Naive thymus-derived CD4-positive, alpha-beta T cell (primary cell): ENCODE measurements at regions of chr6 and their contacts with region 1.

Region 1: GRCh38 chr6:31834434-31835198 is 7.1 kb downstream of the HSPA1B start:
- DNase-seq: peak; percentile 77 to 84 (median 82)
- ATAC-seq: peak; percentile 82
- H3K4me3 ChIP-seq: peak overlapping the region; percentile 73
- H3K4me3 Mint-ChIP-seq: peak overlapping the region; percentile 84 to 99 (median 99)
- H3K27ac ChIP-seq: peak overlapping the region; percentile 92
- H3K27ac Mint-ChIP-seq: peak overlapping the region; percentile 91 to 100 (median 99)
- H3K4me1 ChIP-seq: peaks cover 40 to 48% of the 10 kb centered on the region in 2 donors
- H3K4me1 Mint-ChIP-seq: peaks cover 31 to 64% (median 53%) of the 10 kb centered on the region in 7 donors
- H3K27me3 ChIP-seq: no peaks in the 10 kb centered on the region
- H3K27me3 Mint-ChIP-seq: no peaks in the 10 kb centered on the region

Region 2: DNA sequence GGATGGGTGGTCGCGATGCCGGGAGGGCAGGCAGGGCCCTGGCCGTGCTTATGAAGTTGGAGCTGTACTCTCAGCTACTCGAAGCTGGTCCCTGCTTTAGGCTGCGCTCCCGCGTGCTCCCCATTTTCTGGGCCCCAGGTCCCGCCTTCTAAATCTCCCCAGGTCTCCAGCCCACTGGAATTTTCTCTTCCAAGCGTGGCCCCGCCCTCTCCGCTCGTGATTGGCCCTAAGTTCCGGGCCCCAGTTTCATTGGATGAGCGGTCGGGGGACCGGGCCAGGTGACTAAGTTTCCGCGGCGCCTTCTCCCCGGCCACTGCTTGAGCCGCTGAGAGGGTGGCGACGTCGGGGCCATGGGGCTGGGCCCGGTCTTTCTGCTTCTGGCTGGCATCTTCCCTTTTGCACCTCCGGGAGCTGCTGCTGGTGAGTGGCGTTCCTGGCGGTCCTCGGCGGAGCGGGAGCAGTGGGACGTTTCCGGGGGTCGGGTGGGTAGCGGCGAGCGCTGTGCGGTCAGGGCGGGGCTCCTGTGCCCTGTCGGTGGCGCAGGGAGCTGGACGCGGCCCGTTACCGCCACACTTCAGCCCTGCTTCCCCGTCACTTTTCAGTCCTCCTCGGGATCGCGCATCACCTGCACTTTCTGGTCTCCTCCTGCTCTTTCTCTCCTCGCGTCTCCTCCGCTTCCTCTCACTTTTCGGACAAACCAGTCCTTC is 431.2 kb before region 1 on chr6 and contains the start of gene MICA:
- CTCF ChIA-PET with region 1: no interaction called
- POLR2A ChIA-PET with region 1: no interaction called
- intact Hi-C with region 1: loop called in 1 of 2 experiments (anchors 10 kb)
- DNase-seq: peak in 8 of 9 donors; percentile 32 to 79 (median 41)
- ATAC-seq: peak; percentile 71
- H3K4me3 ChIP-seq: peak within 1 kb of the TSS; percentile 79
- H3K4me3 Mint-ChIP-seq: peak within 1 kb of the TSS; percentile 83 to 98 (median 90)
- H3K27ac ChIP-seq: peak within 1 kb of the TSS; percentile 76
- H3K27ac Mint-ChIP-seq: peak within 1 kb of the TSS; percentile 25 to 94 (median 78)
- H3K4me1 ChIP-seq: peaks cover 17 to 19% of the 10 kb centered on the region in 2 donors
- H3K4me1 Mint-ChIP-seq: peaks cover 64 to 90% (median 70%) of the 10 kb centered on the region in 7 donors
- H3K27me3 ChIP-seq: no peaks in the 10 kb centered on the region
- H3K27me3 Mint-ChIP-seq: peaks cover 0 to 2% (median 0%) of the 10 kb centered on the region in 5 donors
- total RNA-seq, gene MICA: 12.1 to 17.4 (median 15.2) TPM

Region 3: GRCh38 chr6:31541658-31542521 is 292.7 kb before region 1 on chr6 and contains the start of gene DDX39B:
- CTCF ChIA-PET with region 1: interaction called, 3 read pairs
- POLR2A ChIA-PET with region 1: interaction called, 4 read pairs
- intact Hi-C with region 1: loop called (anchors 1 kb)
- DNase-seq: peak; percentile 80 to 97 (median 94)
- ATAC-seq: peak; percentile 83
- H3K4me3 ChIP-seq: peak within 1 kb of the TSS; percentile 77
- H3K4me3 Mint-ChIP-seq: peak within 1 kb of the TSS; percentile 84 to 99 (median 98)
- H3K27ac ChIP-seq: peak within 1 kb of the TSS; percentile 97
- H3K27ac Mint-ChIP-seq: peak within 1 kb of the TSS; percentile 90 to 100 (median 100)
- H3K4me1 ChIP-seq: peaks cover 34 to 45% of the 10 kb centered on the region in 2 donors
- H3K4me1 Mint-ChIP-seq: peaks cover 34 to 65% (median 55%) of the 10 kb centered on the region in 7 donors
- H3K27me3 ChIP-seq: no peaks in the 10 kb centered on the region
- H3K27me3 Mint-ChIP-seq: no peaks in the 10 kb centered on the region
- total RNA-seq, gene DDX39B: 443 to 761 (median 546) TPM

Region 4: GRCh38 chr6:31680840-31681671 is 153.6 kb before region 1 on chr6 and contains the start of gene LY6G5C:
- CTCF ChIA-PET with region 1: interaction called, 12 read pairs
- POLR2A ChIA-PET with region 1: interaction called, 12 read pairs
- intact Hi-C with region 1: loop called (anchors 1 kb)
- DNase-seq: peak in 8 of 9 donors; percentile 28 to 65 (median 48)
- ATAC-seq: peak; percentile 80
- H3K4me3 ChIP-seq: peak within 1 kb of the TSS; percentile 78
- H3K4me3 Mint-ChIP-seq: peak within 1 kb of the TSS; percentile 86 to 98 (median 90)
- H3K27ac ChIP-seq: peak within 1 kb of the TSS; percentile 68
- H3K27ac Mint-ChIP-seq: peak within 1 kb of the TSS; percentile 60 to 86 (median 68)
- H3K4me1 ChIP-seq: peaks cover 15 to 16% of the 10 kb centered on the region in 2 donors
- H3K4me1 Mint-ChIP-seq: peaks cover 14 to 32% (median 19%) of the 10 kb centered on the region in 7 donors
- H3K27me3 ChIP-seq: no peaks in the 10 kb centered on the region
- H3K27me3 Mint-ChIP-seq: no peaks in the 10 kb centered on the region
- total RNA-seq, gene LY6G5C: 2.4 to 4.3 (median 3.1) TPM

Region 5: DNA sequence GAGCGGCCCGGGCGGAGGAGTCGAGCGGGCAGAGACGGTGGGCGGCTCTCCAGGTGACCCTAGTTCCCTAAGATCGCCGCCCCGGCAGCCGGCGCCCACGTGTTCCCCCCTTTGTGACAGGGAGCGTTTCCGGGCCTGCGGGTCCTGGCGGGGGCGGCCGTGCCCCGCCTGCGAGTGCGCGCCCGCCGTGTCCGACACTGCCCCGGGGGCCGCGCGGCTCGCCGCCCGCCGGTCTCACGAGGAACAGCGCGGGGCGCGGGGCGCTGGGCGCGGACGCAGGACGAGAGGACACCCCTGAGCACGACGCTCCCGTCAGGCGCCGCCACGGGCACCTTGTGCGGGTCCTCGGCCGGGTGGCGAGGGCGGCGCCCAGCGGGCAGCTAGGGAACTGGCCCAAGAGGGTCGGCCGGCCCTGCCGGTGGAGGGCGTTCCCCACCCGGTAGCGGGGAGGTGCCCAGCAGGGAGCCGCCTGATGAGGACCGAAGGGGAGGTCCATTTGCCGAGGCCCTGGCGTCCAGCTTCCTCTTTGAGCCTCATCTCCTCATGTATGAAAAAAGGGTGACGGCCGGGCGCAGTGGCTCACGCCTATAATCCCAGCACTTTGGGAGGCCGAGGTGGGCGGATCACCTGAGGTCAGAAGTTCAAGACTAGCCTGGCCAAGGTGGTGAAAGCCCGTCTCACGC is 38.9 kb before region 1 on chr6 and contains the start of gene VARS1:
- CTCF ChIA-PET with region 1: interaction called, 7 read pairs
- POLR2A ChIA-PET with region 1: interaction called, 9 read pairs
- intact Hi-C with region 1: loop called in 1 of 2 experiments (anchors 5 kb)
- DNase-seq: peak; percentile 75 to 92 (median 85)
- ATAC-seq: peak; percentile 96
- H3K4me3 ChIP-seq: peak within 1 kb of the TSS; percentile 76
- H3K4me3 Mint-ChIP-seq: peak within 1 kb of the TSS; percentile 85 to 99 (median 96)
- H3K27ac ChIP-seq: peak within 1 kb of the TSS; percentile 93
- H3K27ac Mint-ChIP-seq: peak within 1 kb of the TSS; percentile 80 to 99 (median 98)
- H3K4me1 ChIP-seq: peaks cover 24 to 32% of the 10 kb centered on the region in 2 donors
- H3K4me1 Mint-ChIP-seq: peaks cover 12 to 55% (median 36%) of the 10 kb centered on the region in 7 donors
- H3K27me3 ChIP-seq: no peaks in the 10 kb centered on the region
- H3K27me3 Mint-ChIP-seq: no peaks in the 10 kb centered on the region
- total RNA-seq, gene VARS1: 34.3 to 84.2 (median 53.2) TPM

Region 6: GRCh38 chr6:31901953-31902643 is 67.5 kb after region 1 on chr6 and contains the start of gene ZBTB12:
- CTCF ChIA-PET with region 1: no interaction called
- POLR2A ChIA-PET with region 1: no interaction called
- intact Hi-C with region 1: loop called (anchors 1 kb)
- DNase-seq: peak; percentile 76 to 90 (median 84)
- ATAC-seq: peak; percentile 76
- H3K4me3 ChIP-seq: peak within 1 kb of the TSS; percentile 80
- H3K4me3 Mint-ChIP-seq: peak within 1 kb of the TSS; percentile 81 to 96 (median 88)
- H3K27ac ChIP-seq: peak within 1 kb of the TSS; percentile 83
- H3K27ac Mint-ChIP-seq: peak within 1 kb of the TSS; percentile 75 to 94 (median 86)
- H3K4me1 ChIP-seq: peaks cover 12 to 16% of the 10 kb centered on the region in 2 donors
- H3K4me1 Mint-ChIP-seq: peaks cover 18 to 34% (median 32%) of the 10 kb centered on the region in 7 donors
- H3K27me3 ChIP-seq: no peaks in the 10 kb centered on the region
- H3K27me3 Mint-ChIP-seq: peaks cover 0 to 11% (median 0%) of the 10 kb centered on the region in 5 donors
- total RNA-seq, gene ZBTB12: 0.77 to 4.5 (median 2.5) TPM

Region 7: GRCh38 chr6:32212076-32212760 is 377.6 kb after region 1 on chr6:
- CTCF ChIA-PET with region 1: no interaction called
- POLR2A ChIA-PET with region 1: no interaction called
- intact Hi-C with region 1: no loop called
- DNase-seq: no peak
- ATAC-seq: no peak
- H3K4me3 ChIP-seq: no peak overlapping the region
- H3K4me3 Mint-ChIP-seq: no peak overlapping the region
- H3K27ac ChIP-seq: no peak overlapping the region
- H3K27ac Mint-ChIP-seq: peak overlapping the region in 4 of 9 donors; percentile 8 to 84 (median 49)
- H3K4me1 ChIP-seq: no peaks in the 10 kb centered on the region
- H3K4me1 Mint-ChIP-seq: peaks cover 0 to 2% (median 0%) of the 10 kb centered on the region in 7 donors
- H3K27me3 ChIP-seq: no peaks in the 10 kb centered on the region
- H3K27me3 Mint-ChIP-seq: peaks cover 0 to 10% (median 0%) of the 10 kb centered on the region in 5 donors